ENCODE measurements at regions of chr17 and their contacts with region 1.

Region 1: DNA sequence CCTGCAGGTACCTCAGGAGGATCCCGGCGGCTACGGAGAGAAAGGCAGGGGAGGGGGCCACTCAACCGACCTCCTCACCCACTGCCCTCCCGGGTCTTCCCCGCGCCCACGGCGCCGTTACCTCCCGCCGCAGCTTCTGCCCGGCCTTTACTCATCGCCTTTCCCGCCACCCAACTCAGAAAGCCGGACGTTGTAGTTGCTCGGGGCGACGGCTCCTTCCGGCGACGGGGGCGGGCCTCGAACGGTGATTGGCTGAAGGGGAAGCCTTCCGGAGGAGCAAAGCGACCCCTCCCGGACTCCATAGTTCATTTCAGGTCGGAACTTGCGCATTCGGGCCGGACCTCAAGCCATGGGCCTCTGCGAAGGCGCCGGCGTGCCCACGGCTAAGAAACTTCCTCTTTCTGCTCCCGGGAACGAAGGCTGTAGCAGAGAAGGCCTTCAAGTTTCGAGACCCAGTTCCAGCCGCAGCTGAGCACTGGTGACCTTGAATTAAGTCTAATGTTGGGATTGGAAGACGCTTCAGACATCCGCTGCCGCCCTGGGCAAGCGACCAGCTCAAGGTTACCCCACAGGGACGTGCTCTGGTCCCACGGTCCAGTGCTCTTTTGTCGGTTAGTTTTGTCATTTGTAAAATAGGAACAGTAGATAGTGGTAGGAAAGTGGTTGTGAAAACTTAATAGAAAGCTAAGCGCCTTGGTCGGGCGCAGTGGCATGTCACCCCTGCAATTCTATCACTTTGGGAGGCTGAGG is at the start of gene PSMC3IP:
- DNase-seq: peak; percentile 96 to 99
- ATAC-seq: peak; percentile 90 to 95
- H3K4me3 ChIP-seq: peak within 1 kb of the TSS; percentile 73
- H3K27ac ChIP-seq: peak within 1 kb of the TSS; percentile 87 to 94
- H3K4me1 ChIP-seq: peaks cover 20% of the 10 kb centered on the region; the same call in 2 of the 3 replicates
- CTCF ChIP-seq: peak; percentile 37
- EP300 ChIP-seq: no peak
- POLR2A ChIP-seq: peak; percentile 82
- RAD21 ChIP-seq: 0 out of 5 replicates have a peak, but pooled peaks of 1 of the 2 experiments have one; percentile 14
- polyA plus RNA-seq, gene PSMC3IP: 17.8 and 26.1 TPM in 2 replicates

Region 2: DNA sequence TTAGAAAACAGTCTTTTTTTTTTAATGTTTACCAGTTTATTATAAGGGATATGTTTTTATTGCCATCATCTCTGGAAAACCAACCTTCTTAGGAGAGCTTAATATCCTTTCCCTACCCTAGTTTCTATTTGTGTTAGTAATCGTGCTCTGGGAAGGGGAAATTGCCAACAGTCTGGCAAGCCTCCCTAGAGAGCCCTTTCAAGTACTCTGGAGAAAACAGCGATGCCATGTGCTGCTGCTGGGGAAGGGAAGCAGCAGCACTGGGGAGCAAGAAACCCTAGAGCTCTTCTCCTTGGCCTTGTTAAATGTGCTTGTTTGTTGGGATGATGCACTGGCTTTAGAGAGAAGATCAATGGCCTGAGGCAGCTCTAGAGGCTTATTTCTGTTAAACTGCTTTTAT is 21.2 kb after region 1 on chr17:
- CTCF ChIA-PET with region 1: interaction called, 120 read pairs
- POLR2A ChIA-PET with region 1: no interaction called
- DNase-seq: no peak
- ATAC-seq: no peak
- H3K4me3 ChIP-seq: no peak overlapping the region
- H3K27ac ChIP-seq: no peak overlapping the region
- H3K4me1 ChIP-seq: no peaks in the 10 kb centered on the region
- CTCF ChIP-seq: no peak
- EP300 ChIP-seq: no peak
- POLR2A ChIP-seq: no peak
- RAD21 ChIP-seq: no peak

Region 3: DNA sequence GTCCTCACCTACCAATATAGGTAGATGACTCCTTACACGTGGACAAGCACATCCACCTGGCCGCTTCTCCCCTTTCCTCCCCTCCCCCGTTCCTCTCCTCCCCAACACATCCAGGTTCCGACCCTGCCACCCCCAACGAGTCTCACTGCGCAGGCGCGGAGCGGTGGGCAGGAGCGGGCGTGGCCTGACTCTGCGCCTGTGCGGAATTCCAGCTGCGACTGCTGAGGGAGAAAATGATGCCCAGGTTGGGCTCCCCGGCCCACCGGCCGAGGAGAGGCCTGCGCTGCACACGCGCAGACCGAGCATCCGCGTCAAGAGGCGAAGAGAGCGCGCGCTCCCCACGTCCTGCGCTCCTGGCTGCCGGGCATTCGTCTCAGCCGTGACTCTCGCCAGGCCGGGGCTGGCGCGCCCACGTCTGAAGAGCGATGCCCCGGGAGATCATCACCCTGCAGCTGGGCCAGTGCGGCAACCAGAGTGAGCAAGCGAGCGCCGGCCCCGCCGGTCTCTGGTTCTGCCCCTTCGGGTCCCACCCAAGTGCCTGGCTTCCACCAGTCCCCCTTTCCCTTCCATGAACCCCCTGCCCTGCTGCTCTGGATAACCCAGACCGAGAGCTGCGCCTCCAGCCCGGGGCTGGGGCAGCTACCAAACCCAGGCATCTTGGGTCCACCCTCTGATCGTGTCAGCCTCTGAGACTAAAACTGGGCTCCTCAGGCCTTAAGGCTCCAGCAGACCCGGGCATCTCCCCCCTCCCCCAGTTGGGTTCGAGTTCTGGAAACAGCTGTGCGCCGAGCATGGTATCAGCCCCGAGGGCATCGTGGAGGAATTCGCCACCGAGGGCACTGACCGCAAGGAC is 81.6 kb after region 1 on chr17 and contains the start of gene TUBG2:
- CTCF ChIA-PET with region 1: interaction called, 46 read pairs
- POLR2A ChIA-PET with region 1: no interaction called
- DNase-seq: peak; percentile 94 to 99
- ATAC-seq: peak; percentile 89 to 95
- H3K4me3 ChIP-seq: peak within 1 kb of the TSS; percentile 67
- H3K27ac ChIP-seq: peak within 1 kb of the TSS; percentile 85 to 94
- H3K4me1 ChIP-seq: peaks cover 18% of the 10 kb centered on the region
- CTCF ChIP-seq: no peak
- EP300 ChIP-seq: no peak
- POLR2A ChIP-seq: peak; percentile 98
- RAD21 ChIP-seq: 0 out of 5 replicates have a peak, but pooled peaks have one; percentile 3 to 21
- polyA plus RNA-seq, gene TUBG2: 14.9 and 18.6 TPM in 2 replicates

Region 4: DNA sequence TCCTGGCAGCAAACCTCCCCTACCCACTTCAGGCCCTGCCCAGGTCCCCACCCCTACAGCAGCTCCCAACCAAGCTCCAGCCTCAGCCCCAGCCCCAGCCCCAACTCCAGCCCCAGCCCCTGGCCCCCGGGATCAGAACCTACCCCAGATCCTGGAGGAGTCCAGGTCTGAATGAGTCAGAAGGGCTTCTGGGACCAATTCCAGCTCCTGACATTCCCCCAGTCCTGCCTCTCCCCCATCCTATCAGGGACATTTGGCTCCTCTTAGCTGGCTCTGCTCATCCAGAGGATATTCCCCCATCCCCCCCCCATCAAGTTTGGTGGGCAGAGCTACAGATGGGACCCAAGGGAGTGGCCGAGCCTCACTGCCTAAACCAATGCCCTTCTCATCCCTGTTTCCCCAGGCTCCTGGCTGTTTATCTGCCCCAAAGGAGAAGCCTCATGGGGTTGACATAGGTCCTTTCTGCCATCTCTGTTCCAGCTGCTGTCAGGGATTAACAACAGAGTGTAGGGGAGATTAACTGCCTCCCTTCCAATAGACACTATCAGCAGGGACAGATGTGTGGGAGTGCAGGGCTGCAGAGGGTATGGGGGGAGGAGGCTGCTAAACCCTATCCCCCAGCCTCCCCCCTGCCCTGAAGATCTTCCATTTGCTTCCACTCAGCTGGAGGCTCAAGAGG is 121.2 kb after region 1 on chr17:
- CTCF ChIA-PET with region 1: interaction called, 43 read pairs
- POLR2A ChIA-PET with region 1: no interaction called
- DNase-seq: no peak
- ATAC-seq: peak; percentile 17 to 45; a peak in 2 of 6 replicates
- H3K4me3 ChIP-seq: no peak overlapping the region
- H3K27ac ChIP-seq: no peak overlapping the region
- H3K4me1 ChIP-seq: peaks cover 6% of the 10 kb centered on the region; the same call in 2 of the 3 replicates
- CTCF ChIP-seq: no peak
- EP300 ChIP-seq: no peak
- POLR2A ChIP-seq: no peak
- RAD21 ChIP-seq: no peak

Region 5: DNA sequence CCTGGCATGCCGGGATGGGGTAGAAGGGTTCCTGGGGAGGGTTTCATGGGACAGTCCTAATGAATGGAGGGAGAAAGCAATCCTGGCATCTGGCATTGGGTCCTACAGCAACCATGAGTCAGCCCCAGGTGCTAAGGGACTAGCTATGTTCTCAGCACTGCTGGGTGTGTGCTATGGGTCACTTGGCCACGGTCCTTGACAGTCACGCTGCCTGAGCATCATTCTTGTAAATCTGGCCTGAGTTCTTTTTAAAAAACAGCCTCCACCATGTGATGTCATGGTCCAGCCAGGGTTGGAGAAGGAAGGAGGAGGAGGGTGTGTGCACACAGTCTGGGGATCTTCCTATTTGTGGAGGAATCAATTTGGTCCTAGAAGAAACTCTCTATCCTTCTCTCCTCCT is 177.1 kb after region 1 on chr17:
- CTCF ChIA-PET with region 1: interaction called, 96 read pairs
- POLR2A ChIA-PET with region 1: no interaction called
- DNase-seq: no peak
- ATAC-seq: peak; percentile 37 to 44; a peak in 3 of 6 replicates
- H3K4me3 ChIP-seq: no peak overlapping the region
- H3K27ac ChIP-seq: no peak overlapping the region
- H3K4me1 ChIP-seq: no peaks in the 10 kb centered on the region
- CTCF ChIP-seq: no peak
- EP300 ChIP-seq: no peak
- POLR2A ChIP-seq: no peak
- RAD21 ChIP-seq: no peak

Region 6: DNA sequence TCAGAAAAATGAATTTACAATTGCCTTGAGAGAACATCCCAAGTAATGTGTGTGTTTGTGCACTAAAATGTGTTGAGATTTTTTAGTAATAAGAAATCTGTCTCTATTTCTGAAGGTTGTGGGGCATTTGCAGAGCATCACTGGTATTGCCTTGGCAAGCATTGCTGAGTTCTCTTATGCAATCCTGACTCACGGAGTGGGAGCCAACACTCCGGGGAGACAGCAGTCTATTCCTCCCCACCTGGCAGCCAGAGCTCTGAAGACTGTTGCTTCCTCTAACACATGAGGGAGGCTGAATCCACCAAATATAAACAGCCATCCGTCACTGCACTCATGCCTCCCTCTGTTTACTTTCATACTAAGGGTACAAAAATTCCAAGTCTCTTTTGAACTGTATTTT is 231.5 kb after region 1 on chr17:
- CTCF ChIA-PET with region 1: interaction called, 12 read pairs
- POLR2A ChIA-PET with region 1: no interaction called
- DNase-seq: peak; percentile 27 to 49
- ATAC-seq: peak; percentile 63 to 65; a peak in 3 of 6 replicates
- H3K4me3 ChIP-seq: no peak overlapping the region
- H3K27ac ChIP-seq: peak overlapping the region in 1 of 2 experiments; percentile 9; a peak in 1 of 6 replicates
- H3K4me1 ChIP-seq: peaks cover 21% of the 10 kb centered on the region
- CTCF ChIP-seq: no peak
- EP300 ChIP-seq: no peak
- POLR2A ChIP-seq: no peak
- RAD21 ChIP-seq: no peak

Measured in A549 (cell line).